OCI-LY7 (cell line): ENCODE measurements at regions of chr5 and their contacts with region 1.

Region 1: DNA sequence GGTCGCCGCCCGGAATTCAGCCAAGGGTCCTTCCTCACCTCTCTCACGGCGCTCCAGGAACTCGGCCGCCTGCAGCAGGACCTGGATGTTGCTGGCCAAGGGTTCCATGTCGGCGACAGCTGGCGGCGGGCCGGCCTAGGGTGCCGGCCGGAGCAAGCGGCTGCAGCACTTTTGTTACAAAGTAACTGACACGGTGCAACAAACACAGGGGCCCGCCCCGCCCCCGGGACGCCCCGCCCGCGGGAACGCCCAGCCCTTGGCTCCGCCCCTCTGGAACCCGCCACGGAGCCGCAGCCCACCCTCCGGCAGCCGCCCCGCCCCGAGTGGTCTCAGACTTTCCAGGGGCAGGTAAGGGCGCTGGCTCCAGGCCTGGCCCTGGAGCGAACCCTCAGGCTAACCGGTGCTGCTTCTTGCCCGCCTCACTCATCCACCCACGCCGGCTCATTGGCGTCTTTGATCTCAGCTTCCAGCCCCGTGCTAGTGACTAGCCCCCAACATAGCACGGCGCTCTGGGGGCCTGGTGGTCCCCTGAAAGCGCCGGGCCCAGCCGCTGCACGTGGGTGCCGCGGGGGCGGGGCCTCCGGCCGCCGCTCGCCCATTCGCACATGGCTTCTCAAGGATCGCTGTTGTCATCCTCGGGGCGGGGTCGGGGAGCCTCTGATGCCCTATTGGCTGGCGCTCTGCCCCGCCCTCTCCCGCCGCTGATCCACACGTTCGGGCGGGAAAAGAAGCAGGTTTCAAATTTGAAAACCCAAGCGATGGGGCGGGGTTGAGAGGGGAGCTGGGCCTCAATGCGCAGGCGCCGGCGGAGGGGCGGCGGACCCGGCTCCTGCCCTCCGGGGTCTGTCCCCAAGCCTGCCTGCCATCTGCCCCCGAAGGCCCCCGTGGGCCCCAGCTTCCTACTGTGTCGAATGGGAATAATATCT is at the start of gene MXD3:
- DNase-seq: peak; percentile 99
- H3K4me3 ChIP-seq: peak within 1 kb of the TSS; percentile 94
- H3K27ac ChIP-seq: peak within 1 kb of the TSS; percentile 92
- H3K4me1 ChIP-seq: peaks cover 51% of the 10 kb centered on the region
- CTCF ChIP-seq: no peak
- total RNA-seq, gene MXD3: 109 and 130 TPM in 2 replicates

Region 2: DNA sequence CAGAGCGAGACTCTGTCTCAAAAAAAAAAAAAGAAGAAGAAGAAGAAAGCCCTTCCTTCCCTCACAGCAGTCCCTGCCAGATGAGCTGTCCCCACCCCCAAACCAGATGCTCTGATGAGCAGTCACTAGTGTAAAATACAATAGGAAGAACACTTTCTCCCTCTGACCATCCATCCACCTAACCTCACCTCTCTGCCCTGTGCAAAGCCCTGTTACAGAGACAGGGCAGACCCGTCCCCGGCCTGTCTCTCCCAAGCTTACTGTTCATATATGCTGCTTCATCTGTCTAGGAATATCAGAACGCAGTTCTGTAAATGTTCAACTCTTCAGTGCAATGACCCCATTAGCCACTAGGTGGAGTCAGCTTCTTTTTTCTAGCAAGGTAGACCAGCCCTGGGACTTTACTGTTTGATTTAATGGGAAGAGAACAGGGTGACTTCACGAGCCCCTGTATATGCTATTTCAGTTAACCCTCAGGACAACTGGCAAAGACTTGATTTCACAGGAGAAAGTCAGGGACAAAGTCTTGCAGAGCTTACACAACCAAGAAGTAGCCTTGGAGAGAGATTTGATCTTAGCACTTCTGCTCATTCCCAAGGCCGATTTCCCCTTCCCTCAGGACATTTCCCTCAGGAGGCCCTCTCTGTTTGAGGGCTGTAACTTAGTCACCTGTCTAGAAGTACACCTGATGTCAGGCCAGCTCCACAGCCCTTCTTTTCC is 240.2 kb before region 1 on chr5:
- CTCF ChIA-PET with region 1: no interaction called
- POLR2A ChIA-PET with region 1: interaction called, 4 read pairs
- intact Hi-C with region 1: loop called (anchors 5 kb)
- DNase-seq: peak; percentile 91
- H3K4me3 ChIP-seq: no peak overlapping the region
- H3K27ac ChIP-seq: peak overlapping the region; percentile 63
- H3K4me1 ChIP-seq: peaks cover 25% of the 10 kb centered on the region
- CTCF ChIP-seq: peak; percentile 97

Region 3: DNA sequence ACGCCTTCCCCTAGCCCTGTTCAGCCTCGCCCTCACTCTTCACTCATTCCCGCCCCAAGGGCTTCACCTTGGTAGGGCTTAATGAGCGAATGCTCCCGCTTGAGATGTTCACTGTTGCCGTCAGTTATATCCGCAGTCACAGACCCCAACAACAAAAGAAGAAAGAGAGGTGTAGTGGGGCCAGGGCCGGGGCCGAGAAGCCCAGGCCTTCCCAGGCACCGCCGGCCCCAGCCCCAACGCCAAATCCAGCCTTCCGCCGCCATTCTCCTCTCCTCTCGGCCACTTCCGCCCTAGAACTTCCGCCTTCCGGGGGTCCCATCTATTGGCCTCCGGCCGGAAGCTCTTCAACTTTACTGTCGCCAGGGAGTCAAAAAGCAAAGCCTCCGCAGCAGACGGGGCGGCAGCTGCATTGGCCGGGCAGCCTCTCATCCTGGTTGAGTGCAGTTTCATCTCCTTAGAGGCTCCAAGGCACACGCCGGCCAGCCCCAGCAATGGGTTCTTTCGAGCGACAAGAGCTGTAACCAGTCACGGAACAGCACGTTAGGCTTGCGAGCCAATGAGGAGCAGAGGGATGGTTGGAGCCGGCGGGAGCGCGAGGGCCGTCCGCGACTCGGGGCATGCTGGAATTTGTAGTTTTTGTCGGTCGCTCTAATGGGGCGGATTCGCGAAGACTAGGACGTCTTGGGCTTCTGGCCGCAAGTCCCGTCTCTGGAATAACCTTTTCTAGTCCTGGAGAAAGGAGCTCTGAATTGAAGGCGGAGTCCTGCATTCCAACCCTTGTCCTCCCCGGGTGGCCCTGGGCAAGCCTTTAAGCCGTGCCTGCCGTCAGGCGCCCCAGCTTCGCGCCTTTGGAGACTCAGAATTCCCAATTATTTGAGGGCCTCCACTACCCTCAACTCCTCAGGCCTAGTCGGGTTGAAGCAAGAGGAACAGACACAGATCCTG is 39.7 kb after region 1 on chr5 and contains the start of gene LMAN2:
- CTCF ChIA-PET with region 1: interaction called, 3 read pairs
- POLR2A ChIA-PET with region 1: interaction called, 5 read pairs
- intact Hi-C with region 1: loop called (anchors 2 kb)
- DNase-seq: peak; percentile 97
- H3K4me3 ChIP-seq: peak within 1 kb of the TSS; percentile 90
- H3K27ac ChIP-seq: peak within 1 kb of the TSS; percentile 91
- H3K4me1 ChIP-seq: peaks cover 47% of the 10 kb centered on the region
- CTCF ChIP-seq: no peak
- total RNA-seq, gene LMAN2: 144 and 151 TPM in 2 replicates